ENCODE measurements at regions of chr4 and their contacts with region 1.

Region 1: GRCh38 chr4:139651282-139652194 is 14.1 kb upstream of the MGST2 start:
- DNase-seq: peak; percentile 77
- H3K4me3 Mint-ChIP-seq: no peak overlapping the region
- H3K27ac Mint-ChIP-seq: no peak overlapping the region
- H3K4me1 Mint-ChIP-seq: peaks cover 6% of the 10 kb centered on the region
- H3K27me3 Mint-ChIP-seq: no peaks in the 10 kb centered on the region

Region 2: GRCh38 chr4:139603576-139604387 is 47.8 kb before region 1 on chr4:
- CTCF ChIA-PET with region 1: interaction called, 27 read pairs
- POLR2A ChIA-PET with region 1: no interaction called
- DNase-seq: peak; percentile 65
- H3K4me3 Mint-ChIP-seq: no peak overlapping the region
- H3K27ac Mint-ChIP-seq: no peak overlapping the region
- H3K4me1 Mint-ChIP-seq: peaks cover 32% of the 10 kb centered on the region
- H3K27me3 Mint-ChIP-seq: peaks cover 2% of the 10 kb centered on the region

Region 3: GRCh38 chr4:139665690-139666529 is 14.4 kb after region 1 on chr4 and contains the start of gene MGST2:
- CTCF ChIA-PET with region 1: interaction called, 35 read pairs
- POLR2A ChIA-PET with region 1: no interaction called
- DNase-seq: peak; percentile 38
- H3K4me3 Mint-ChIP-seq: peak within 1 kb of the TSS; percentile 85
- H3K27ac Mint-ChIP-seq: peak within 1 kb of the TSS; percentile 95
- H3K4me1 Mint-ChIP-seq: peaks cover 43% of the 10 kb centered on the region
- H3K27me3 Mint-ChIP-seq: no peaks in the 10 kb centered on the region
- total RNA-seq, gene MGST2: 22.9 to 25.0 TPM